A549 (cell line): ENCODE measurements at regions of chr7 and their contacts with region 1.

Region 1: DNA sequence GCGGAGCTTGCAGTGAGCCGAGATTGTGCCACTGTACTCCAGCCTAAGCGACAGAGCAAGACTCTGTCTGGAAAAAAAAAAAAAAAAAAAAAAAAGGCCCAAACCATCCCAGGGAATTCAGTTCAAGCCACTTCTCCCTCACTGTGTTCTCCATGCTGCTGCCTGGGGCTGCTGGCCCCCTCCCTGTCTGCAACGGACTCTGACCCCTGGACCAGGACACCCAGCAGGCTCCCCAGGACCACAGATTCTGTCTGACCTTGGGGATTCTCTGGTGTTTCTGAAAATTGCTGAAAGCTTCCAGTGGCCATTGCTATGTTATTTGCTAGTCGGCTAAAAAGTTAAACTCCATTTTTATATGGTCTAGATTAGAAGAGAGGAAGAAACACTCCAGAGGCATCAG is 261.7 kb upstream of the C7orf33 start:
- DNase-seq: no peak
- ATAC-seq: no peak
- H3K4me3 ChIP-seq: no peak overlapping the region
- H3K27ac ChIP-seq: no peak overlapping the region
- H3K4me1 ChIP-seq: 0 out of 3 replicates have a peak, but pooled peaks cover 9% of the 10 kb centered on the region
- CTCF ChIP-seq: no peak
- EP300 ChIP-seq: no peak
- POLR2A ChIP-seq: no peak
- RAD21 ChIP-seq: no peak

Region 2: GRCh38 chr7:148318102-148318811 is 10.6 kb before region 1 on chr7:
- CTCF ChIA-PET with region 1: no interaction called
- POLR2A ChIA-PET with region 1: interaction called, 11 read pairs
- DNase-seq: no peak
- ATAC-seq: no peak
- H3K4me3 ChIP-seq: no peak overlapping the region
- H3K27ac ChIP-seq: no peak overlapping the region
- H3K4me1 ChIP-seq: no peaks in the 10 kb centered on the region
- CTCF ChIP-seq: no peak
- EP300 ChIP-seq: no peak
- POLR2A ChIP-seq: no peak
- RAD21 ChIP-seq: no peak